ENCODE measurements at regions of chr20 and their contacts with region 1.

Region 1: DNA sequence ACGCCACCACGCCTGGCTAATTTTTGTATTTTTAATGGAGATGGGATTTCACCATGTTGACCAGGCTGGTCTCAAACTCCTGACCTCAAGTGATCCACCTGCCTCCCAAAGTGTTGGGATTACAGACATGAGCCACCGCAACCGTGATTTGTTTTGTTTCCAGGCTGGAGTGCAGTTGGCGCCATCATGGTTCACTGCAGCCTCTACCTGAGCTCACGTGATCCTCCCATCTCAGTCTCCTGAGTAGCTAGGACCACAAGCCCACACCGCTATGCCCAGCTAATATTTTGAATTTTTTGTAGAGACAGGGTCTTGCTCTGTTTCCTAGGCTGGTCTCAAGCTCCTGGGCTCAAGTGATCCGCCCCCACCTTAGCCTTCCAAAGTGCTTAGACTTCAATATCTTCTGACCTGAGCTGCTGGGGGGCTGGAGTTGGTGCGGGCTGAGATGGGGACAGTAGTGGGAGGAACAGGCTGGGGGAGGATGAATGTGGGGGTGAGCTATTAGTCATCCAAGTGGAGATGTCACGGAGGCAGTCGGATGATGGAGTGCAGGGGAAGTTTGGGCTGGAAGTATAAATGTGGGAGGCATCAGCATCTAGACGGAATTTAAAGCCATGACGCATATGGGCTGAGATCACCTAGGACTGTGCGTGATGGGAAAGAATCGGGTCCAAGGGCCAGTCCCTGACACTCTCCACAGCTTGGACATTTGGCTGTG is 23.1 kb upstream of the ZMYND8 start:
- DNase-seq: no peak
- H3K4me3 ChIP-seq: no peak overlapping the region
- H3K27ac ChIP-seq: no peak overlapping the region
- H3K4me1 ChIP-seq: peaks cover 0 to 11% (median 2%) of the 10 kb centered on the region in 4 experiments; a peak in 5 of 7 replicates
- H3K27me3 ChIP-seq: no peaks in the 10 kb centered on the region
- CTCF ChIP-seq: no peak
- EP300 ChIP-seq: no peak
- POLR2A ChIP-seq: no peak
- RAD21 ChIP-seq: no peak

Region 2: GRCh38 chr20:46791706-46792375 is 587.8 kb before region 1 on chr20:
- CTCF ChIA-PET with region 1: no interaction called
- POLR2A ChIA-PET with region 1: no interaction called
- DNase-seq: no peak
- H3K4me3 ChIP-seq: no peak overlapping the region
- H3K27ac ChIP-seq: no peak overlapping the region
- H3K4me1 ChIP-seq: peaks cover 0 to 9% (median 0%) of the 10 kb centered on the region in 4 experiments; a peak in 3 of 7 replicates
- H3K27me3 ChIP-seq: no peaks in the 10 kb centered on the region; a peak in 1 of 7 replicates
- CTCF ChIP-seq: peak in 2 of 3 experiments; percentile 10 to 21; a peak in 2 of 4 replicates
- EP300 ChIP-seq: no peak
- POLR2A ChIP-seq: no peak
- RAD21 ChIP-seq: peak in 1 of 2 experiments; percentile 3; a peak in 1 of 4 replicates

Region 3: DNA sequence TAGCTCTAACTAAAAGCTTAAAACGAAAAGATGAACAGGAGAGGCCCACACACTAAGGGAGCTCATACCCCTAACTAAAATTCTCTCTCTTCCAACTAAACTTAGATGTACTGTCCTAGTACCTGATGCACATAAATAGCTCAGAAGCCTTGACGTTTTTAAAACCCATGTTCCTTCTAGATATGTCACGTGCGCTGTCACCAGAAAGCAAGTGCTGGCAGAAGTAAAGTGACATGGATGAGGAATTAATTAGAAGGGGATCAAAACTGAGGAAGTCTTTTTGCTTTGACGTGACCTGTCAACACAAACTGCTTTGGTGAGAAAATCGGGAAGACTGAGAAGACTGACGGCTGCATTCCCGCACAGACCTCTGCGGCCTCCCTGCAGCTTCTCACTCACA is 165.6 kb before region 1 on chr20:
- CTCF ChIA-PET with region 1: interaction called, 15 read pairs
- POLR2A ChIA-PET with region 1: no interaction called
- DNase-seq: no peak
- H3K4me3 ChIP-seq: no peak overlapping the region
- H3K27ac ChIP-seq: no peak overlapping the region
- H3K4me1 ChIP-seq: no peaks in the 10 kb centered on the region
- H3K27me3 ChIP-seq: no peaks in the 10 kb centered on the region
- CTCF ChIP-seq: no peak
- EP300 ChIP-seq: no peak
- POLR2A ChIP-seq: no peak
- RAD21 ChIP-seq: no peak

Region 4: DNA sequence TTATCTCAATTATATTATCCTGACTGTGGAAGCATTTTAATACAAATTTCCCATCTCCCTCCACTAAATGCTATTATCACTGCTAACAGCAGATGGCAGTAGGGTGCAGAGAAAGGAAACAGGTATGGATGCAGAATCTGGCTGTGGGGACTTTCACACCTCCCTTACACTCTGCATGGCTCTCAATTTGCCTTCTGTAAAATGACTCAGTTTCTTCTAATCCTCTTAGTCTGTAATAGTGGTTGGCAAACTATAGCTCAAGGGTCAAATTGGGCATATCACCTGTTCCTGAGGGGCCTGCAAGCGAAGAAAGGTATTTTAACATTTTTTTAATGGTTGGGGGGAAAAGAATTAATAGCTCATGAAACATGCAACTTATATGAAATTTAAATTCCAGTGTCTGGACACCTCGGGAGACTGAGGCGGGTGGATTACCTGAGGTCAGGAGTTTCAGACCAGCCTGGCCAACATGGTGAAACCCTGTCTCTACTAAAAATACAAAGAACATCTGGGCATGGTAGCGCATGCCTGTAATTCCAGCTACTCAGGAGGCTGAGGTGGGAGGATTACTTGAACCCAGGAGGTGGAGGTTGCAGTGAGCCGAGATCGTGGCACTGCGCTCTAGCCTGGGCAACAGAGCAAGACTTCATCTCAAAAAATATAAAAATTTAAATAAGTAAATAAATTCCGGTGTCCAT is 106.5 kb before region 1 on chr20:
- CTCF ChIA-PET with region 1: interaction called, 179 read pairs
- POLR2A ChIA-PET with region 1: interaction called, 8 read pairs
- DNase-seq: peak; percentile 7 to 57
- H3K4me3 ChIP-seq: no peak overlapping the region
- H3K27ac ChIP-seq: no peak overlapping the region
- H3K4me1 ChIP-seq: peaks cover 0 to 2% (median 0%) of the 10 kb centered on the region in 4 experiments; a peak in 1 of 7 replicates
- H3K27me3 ChIP-seq: no peaks in the 10 kb centered on the region
- CTCF ChIP-seq: peak in 2 of 3 experiments; percentile 72 to 80; a peak in 3 of 4 replicates
- EP300 ChIP-seq: no peak
- POLR2A ChIP-seq: no peak
- RAD21 ChIP-seq: peak; percentile 89 to 91

Region 5: GRCh38 chr20:47296950-47297349 is 82.6 kb before region 1 on chr20:
- CTCF ChIA-PET with region 1: interaction called, 33 read pairs
- POLR2A ChIA-PET with region 1: interaction called, 1,191 read pairs
- DNase-seq: no peak
- H3K4me3 ChIP-seq: no peak overlapping the region
- H3K27ac ChIP-seq: no peak overlapping the region
- H3K4me1 ChIP-seq: peaks cover 0 to 9% (median 0%) of the 10 kb centered on the region in 4 experiments; a peak in 1 of 7 replicates
- H3K27me3 ChIP-seq: no peaks in the 10 kb centered on the region
- CTCF ChIP-seq: peak; percentile 19 to 36 (median 26); a peak in 3 of 4 replicates
- EP300 ChIP-seq: no peak
- POLR2A ChIP-seq: no peak
- RAD21 ChIP-seq: peak; percentile 59 to 68

Region 6: DNA sequence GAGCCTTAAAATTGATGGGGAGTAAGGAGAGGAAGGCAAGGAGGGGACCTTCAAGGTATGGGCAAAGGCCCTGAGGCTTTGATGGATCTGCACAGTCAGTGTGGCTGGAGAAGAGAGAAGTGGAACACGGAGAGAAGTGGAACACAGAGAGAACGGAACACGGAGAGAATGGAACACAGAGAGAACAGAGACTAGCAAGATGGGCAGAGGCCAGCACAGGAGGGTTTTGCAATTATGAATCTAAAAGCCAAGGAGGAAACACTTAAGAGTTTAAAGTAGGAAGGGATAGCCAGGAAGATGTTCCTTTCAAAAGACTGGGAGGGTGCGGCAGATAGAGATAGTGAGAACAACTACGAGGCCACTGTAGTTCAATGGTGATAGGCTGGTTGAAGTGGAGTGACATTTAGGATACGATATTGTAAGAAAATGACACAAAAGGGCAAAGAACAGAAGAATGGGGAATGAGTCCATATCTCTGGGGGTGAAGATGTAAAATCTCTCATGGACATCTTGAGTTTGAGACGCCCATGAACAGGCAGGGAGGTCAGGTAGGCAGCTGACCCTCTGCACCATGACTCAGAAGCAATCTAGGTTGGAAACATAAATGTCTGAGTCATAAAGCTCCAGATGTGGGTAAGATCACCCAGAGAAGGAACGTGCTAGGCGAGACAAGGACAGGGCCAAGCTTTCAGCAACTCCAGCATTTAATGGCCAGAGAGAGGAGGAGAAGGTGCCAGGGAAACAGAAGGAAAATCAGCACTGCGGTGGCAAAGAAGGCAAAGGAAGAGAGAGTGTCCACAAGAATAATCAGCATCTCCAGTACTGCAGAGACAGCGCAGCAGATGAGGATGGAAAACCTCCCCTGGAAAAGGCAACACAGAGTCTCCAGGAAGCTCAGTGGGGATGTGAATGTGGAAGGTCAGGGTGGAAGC is 48.4 kb before region 1 on chr20:
- CTCF ChIA-PET with region 1: interaction called, 33 read pairs
- POLR2A ChIA-PET with region 1: interaction called, 1,191 read pairs
- DNase-seq: no peak
- H3K4me3 ChIP-seq: no peak overlapping the region
- H3K27ac ChIP-seq: no peak overlapping the region
- H3K4me1 ChIP-seq: peaks cover 2 to 30% (median 10%) of the 10 kb centered on the region in 4 experiments; a peak in 5 of 7 replicates
- H3K27me3 ChIP-seq: no peaks in the 10 kb centered on the region
- CTCF ChIP-seq: no peak
- EP300 ChIP-seq: no peak
- POLR2A ChIP-seq: no peak
- RAD21 ChIP-seq: no peak

Region 7: GRCh38 chr20:47610247-47610944 is 230.8 kb after region 1 on chr20:
- CTCF ChIA-PET with region 1: no interaction called
- POLR2A ChIA-PET with region 1: no interaction called
- DNase-seq: no peak
- H3K4me3 ChIP-seq: no peak overlapping the region
- H3K27ac ChIP-seq: no peak overlapping the region
- H3K4me1 ChIP-seq: no peaks in the 10 kb centered on the region
- H3K27me3 ChIP-seq: peaks cover 0 to 1% (median 0%) of the 10 kb centered on the region in 4 experiments; a peak in 1 of 7 replicates
- CTCF ChIP-seq: no peak
- EP300 ChIP-seq: no peak
- POLR2A ChIP-seq: no peak
- RAD21 ChIP-seq: no peak

Region 8: GRCh38 chr20:47620808-47621805 is 241.5 kb after region 1 on chr20:
- CTCF ChIA-PET with region 1: interaction called, 14 read pairs
- POLR2A ChIA-PET with region 1: no interaction called
- DNase-seq: no peak
- H3K4me3 ChIP-seq: no peak overlapping the region
- H3K27ac ChIP-seq: no peak overlapping the region
- H3K4me1 ChIP-seq: peaks cover 0 to 4% (median 1%) of the 10 kb centered on the region in 4 experiments; a peak in 2 of 7 replicates
- H3K27me3 ChIP-seq: no peaks in the 10 kb centered on the region
- CTCF ChIP-seq: peak in 2 of 3 experiments; percentile 39 to 50; a peak in 2 of 4 replicates
- EP300 ChIP-seq: no peak
- POLR2A ChIP-seq: no peak
- RAD21 ChIP-seq: peak; percentile 79 to 84

Measured in H1 (cell line).